ENCODE measurements at regions of chr10 and their contacts with region 1.

Region 1: DNA sequence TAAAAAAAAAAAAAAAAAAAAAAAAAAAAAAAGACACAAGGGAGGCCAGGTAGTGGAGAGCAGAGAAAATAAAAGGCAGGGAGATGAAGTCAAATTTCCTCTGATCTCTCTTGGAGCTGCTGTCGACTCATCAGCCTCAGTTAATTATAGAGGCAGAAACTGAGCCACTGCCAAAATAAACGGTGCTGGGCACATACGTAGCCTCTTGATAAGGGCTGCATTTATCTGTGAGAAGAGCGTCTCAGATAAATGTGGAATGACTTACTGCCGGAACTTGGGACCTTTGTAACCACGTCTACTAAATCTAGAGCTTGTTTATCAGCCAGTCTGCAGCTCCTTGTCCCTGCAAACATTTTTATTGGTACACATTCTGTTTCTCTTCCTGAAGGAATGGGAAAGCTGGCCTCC is 162.3 kb downstream of the BAMBI start:
- DNase-seq: peak in 1 of 3 donors; percentile 19
- ATAC-seq: peak; percentile 64
- H3K4me3 ChIP-seq: no peak overlapping the region
- H3K4me1 ChIP-seq: no peaks in the 10 kb centered on the region
- CTCF ChIP-seq: no peak

Region 2: GRCh38 chr10:28592930-28593329 is 246.7 kb before region 1 on chr10:
- intact Hi-C with region 1: no loop called
- DNase-seq: no peak
- ATAC-seq: peak; percentile 33
- H3K4me3 ChIP-seq: no peak overlapping the region
- H3K4me1 ChIP-seq: peaks cover 3% of the 10 kb centered on the region
- CTCF ChIP-seq: no peak

Region 3: DNA sequence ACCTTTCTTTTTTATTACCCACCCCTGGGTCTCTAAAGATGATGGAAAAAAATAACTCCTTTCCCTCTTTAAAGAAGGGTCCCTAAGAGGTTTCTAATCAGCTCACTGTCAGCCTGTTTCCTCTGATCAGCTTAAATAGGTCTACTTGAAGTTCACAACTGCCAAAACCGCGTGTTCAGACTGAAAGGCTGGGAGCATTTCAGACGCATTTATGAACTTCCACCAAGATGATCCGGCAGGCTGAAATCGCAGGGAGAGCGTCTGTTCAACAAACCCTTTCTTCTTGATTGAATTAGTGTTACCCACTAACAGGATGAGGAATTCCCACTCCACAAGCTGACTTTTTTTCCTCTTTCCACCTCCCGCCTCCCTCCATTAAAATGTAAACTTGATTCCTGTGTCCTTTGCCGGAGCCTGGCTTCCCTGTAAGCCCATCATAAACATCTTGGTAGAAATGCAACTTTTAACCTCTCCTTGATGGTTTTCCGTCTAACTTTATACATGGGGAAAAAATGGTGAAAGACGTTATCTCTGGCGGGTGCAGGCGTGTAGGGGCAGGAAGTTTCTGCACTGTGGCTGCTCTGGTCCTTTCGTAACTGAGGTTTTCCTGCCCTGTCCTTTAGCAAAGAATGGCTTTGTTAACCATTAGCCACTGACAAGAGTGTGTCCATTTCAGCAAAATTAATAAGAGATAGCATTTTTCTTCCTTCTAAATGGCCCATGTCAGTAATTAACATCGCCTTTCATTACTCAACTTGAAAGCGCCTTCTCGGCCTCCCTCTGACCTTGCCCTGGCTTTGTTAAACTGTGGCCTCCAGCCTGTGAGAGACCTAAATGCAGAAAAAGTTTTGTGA is 31.6 kb before region 1 on chr10:
- intact Hi-C with region 1: loop called in 1 of 2 experiments (anchors 2 kb)
- DNase-seq: no peak
- ATAC-seq: no peak
- H3K4me3 ChIP-seq: no peak overlapping the region
- H3K4me1 ChIP-seq: no peaks in the 10 kb centered on the region
- CTCF ChIP-seq: no peak